GM23248 (cell line): ENCODE measurements at regions of chr11 and their contacts with region 1.

Region 1: DNA sequence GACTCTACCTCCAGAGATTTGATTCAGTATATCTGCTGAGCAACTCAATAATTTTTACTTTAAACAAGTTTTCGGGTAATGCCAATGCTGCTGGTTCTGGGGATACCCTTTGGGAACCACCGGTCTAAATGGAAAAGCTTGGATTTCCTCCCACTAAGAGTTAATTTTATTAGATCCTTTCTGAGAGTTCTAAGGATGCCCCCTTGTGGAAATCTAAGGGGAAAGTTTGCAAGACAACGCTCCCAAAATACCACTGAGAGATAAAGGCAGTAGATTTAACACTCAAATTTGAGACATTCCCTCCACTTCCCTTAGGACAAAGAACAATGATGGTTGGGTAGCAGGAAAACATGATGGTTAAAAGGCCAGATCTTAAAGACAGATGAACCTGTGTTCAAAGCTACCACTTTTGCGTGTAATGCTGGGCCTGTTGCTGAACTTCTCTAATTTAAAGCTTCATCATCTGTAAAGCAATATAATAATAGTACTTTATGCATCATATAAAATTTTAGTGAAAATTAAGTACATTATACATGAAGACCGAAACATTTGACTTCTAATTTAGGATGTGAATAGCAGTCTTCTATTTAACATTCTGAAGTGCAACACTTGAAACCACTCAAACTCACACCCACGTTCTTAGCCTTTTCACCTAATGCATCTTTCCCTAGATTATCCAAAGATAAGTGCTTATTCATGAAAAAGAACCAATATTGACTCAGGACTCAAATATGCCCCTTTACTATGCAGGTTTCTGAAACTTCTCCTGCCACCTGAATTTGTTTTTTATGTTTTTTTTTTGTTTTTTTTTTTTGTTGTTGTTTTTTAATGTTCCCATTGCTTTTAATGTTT is 110.1 kb upstream of the LUZP2 start:
- DNase-seq: peak; percentile 65
- H3K4me3 ChIP-seq: no peak overlapping the region
- H3K27ac ChIP-seq: no peak overlapping the region
- H3K4me1 ChIP-seq: no peaks in the 10 kb centered on the region
- H3K27me3 ChIP-seq: no peaks in the 10 kb centered on the region

Region 2: DNA sequence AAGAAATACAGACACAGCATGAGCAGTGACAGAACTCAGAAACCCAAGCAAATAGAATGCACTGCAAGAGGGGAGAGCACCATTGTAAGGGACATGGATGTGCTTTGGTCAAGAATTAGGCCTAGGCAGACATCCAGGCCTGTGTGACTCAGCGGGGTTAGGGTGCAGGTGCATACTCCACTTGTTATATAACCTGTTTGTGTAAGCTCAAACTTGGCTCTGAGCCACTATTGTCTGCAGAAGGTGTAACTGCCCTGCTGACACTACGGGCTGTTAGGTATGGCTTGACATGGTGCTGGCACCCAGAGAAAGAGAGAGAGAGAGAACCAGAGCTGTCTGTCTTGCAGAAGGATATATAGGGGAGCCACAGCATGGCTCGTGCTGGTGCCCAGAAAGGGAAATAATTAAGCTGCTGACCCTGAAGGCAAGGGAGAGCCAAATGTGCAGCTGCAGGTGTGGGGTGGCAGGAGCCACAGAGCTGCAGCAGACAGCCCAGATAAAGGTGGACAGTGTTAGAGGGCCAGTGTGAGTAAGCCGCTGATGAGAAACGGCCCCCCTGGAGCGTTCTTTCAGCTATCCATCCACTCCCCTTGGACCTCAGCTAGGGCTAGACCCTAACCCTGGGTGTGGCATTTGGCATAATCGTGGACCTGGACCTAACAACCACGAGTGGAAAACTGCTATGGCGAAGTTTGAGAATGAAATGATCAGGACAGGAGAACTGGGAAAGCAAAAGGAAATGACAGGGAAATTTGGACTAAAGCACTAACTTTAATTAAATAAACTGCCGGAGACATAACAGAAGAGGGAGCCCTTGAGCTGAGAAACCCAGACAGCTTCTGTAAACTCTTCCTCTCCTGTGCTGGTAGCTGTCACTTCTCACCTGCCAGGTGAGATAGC is 1273.5 kb before region 1 on chr11:
- in situ Hi-C with region 1: loop called (anchors 25 kb)
- DNase-seq: peak; percentile 64
- H3K4me3 ChIP-seq: no peak overlapping the region
- H3K27ac ChIP-seq: no peak overlapping the region
- H3K4me1 ChIP-seq: no peaks in the 10 kb centered on the region
- H3K27me3 ChIP-seq: 0 out of 2 replicates have a peak, but pooled peaks cover 20% of the 10 kb centered on the region

Region 3: GRCh38 chr11:23836981-23837380 is 549.8 kb before region 1 on chr11:
- in situ Hi-C with region 1: loop called (anchors 25 kb)
- DNase-seq: no peak
- H3K4me3 ChIP-seq: no peak overlapping the region
- H3K27ac ChIP-seq: no peak overlapping the region
- H3K4me1 ChIP-seq: peaks cover 8% of the 10 kb centered on the region; the same call in 1 of the 2 replicates
- H3K27me3 ChIP-seq: no peaks in the 10 kb centered on the region

Region 4: DNA sequence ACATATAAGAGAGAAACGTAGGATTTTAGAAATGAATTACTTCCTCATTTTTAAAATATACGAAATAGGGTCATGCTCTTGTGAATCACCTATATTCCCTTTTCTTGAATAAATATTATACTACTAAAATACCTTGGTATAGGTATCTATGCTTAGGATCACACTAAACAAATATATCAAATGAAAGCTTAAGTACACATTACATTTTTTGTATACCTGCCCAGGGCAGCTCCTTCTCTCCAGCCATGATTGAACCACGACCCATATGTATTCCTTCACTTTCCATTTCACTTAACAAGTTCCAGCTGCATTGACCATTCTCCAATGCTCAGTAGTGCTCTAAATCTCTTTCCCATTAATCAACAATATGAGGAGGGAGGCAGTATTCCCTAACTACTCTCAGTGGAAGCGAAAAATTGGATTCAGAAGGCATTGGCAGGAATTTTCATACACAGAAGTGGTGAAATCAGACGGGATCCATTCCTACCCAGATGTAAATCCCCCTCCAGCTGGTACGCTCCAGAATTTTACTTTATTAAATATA is 262.0 kb before region 1 on chr11:
- in situ Hi-C with region 1: no loop called
- DNase-seq: no peak
- H3K4me3 ChIP-seq: no peak overlapping the region
- H3K27ac ChIP-seq: no peak overlapping the region
- H3K4me1 ChIP-seq: no peaks in the 10 kb centered on the region
- H3K27me3 ChIP-seq: no peaks in the 10 kb centered on the region